CD8-positive, alpha-beta T cell (primary cell): ENCODE measurements at regions of chr17 and their contacts with region 1.

Region 1: GRCh38 chr17:11109106-11109505 is 131.9 kb upstream of the SHISA6 start:
- DNase-seq: no peak
- ATAC-seq: no peak
- H3K4me3 ChIP-seq: no peak overlapping the region
- H3K4me3 Mint-ChIP-seq: no peak overlapping the region
- H3K27ac ChIP-seq: no peak overlapping the region
- H3K27ac Mint-ChIP-seq: no peak overlapping the region
- H3K4me1 ChIP-seq: no peaks in the 10 kb centered on the region
- H3K4me1 Mint-ChIP-seq: no peaks in the 10 kb centered on the region
- H3K27me3 ChIP-seq: no peaks in the 10 kb centered on the region
- H3K27me3 Mint-ChIP-seq: no peaks in the 10 kb centered on the region
- CTCF ChIP-seq: no peak

Region 2: GRCh38 chr17:10600571-10600970 is 508.5 kb before region 1 on chr17:
- CTCF ChIA-PET with region 1: no interaction called
- POLR2A ChIA-PET with region 1: no interaction called
- intact Hi-C with region 1: no loop called
- DNase-seq: no peak
- ATAC-seq: no peak
- H3K4me3 ChIP-seq: no peak overlapping the region
- H3K4me3 Mint-ChIP-seq: no peak overlapping the region
- H3K27ac ChIP-seq: no peak overlapping the region
- H3K27ac Mint-ChIP-seq: no peak overlapping the region
- H3K4me1 ChIP-seq: no peaks in the 10 kb centered on the region
- H3K4me1 Mint-ChIP-seq: no peaks in the 10 kb centered on the region
- H3K27me3 ChIP-seq: peaks cover 0 to 4% of the 10 kb centered on the region in 2 experiments
- H3K27me3 Mint-ChIP-seq: peaks cover 11% of the 10 kb centered on the region
- CTCF ChIP-seq: no peak

Region 3: GRCh38 chr17:11151818-11152425 is 42.8 kb after region 1 on chr17:
- CTCF ChIA-PET with region 1: no interaction called
- POLR2A ChIA-PET with region 1: no interaction called
- intact Hi-C with region 1: loop called in 1 of 2 experiments (anchors 10 kb)
- DNase-seq: no peak
- ATAC-seq: no peak
- H3K4me3 ChIP-seq: no peak overlapping the region
- H3K4me3 Mint-ChIP-seq: no peak overlapping the region
- H3K27ac ChIP-seq: no peak overlapping the region
- H3K27ac Mint-ChIP-seq: no peak overlapping the region
- H3K4me1 ChIP-seq: no peaks in the 10 kb centered on the region
- H3K4me1 Mint-ChIP-seq: no peaks in the 10 kb centered on the region
- H3K27me3 ChIP-seq: no peaks in the 10 kb centered on the region
- H3K27me3 Mint-ChIP-seq: no peaks in the 10 kb centered on the region
- CTCF ChIP-seq: no peak